Naive thymus-derived CD4-positive, alpha-beta T cell (primary cell): ENCODE measurements at regions of chr20 and their contacts with region 1.

Region 1: GRCh38 chr20:50588034-50588611 is 77.9 kb downstream of the PTPN1 start:
- DNase-seq: peak; percentile 45 to 78 (median 66)
- ATAC-seq: peak; percentile 88
- H3K4me3 ChIP-seq: no peak overlapping the region
- H3K4me3 Mint-ChIP-seq: peak overlapping the region in 1 of 10 donors; percentile 23
- H3K27ac ChIP-seq: no peak overlapping the region
- H3K27ac Mint-ChIP-seq: peak overlapping the region in 6 of 9 donors; percentile 4 to 80 (median 24)
- H3K4me1 ChIP-seq: no peaks in the 10 kb centered on the region
- H3K4me1 Mint-ChIP-seq: peaks cover 0 to 5% (median 2%) of the 10 kb centered on the region in 7 donors
- H3K27me3 ChIP-seq: no peaks in the 10 kb centered on the region
- H3K27me3 Mint-ChIP-seq: no peaks in the 10 kb centered on the region

Region 2: GRCh38 chr20:50504231-50504823 is 83.8 kb before region 1 on chr20:
- CTCF ChIA-PET with region 1: interaction called, 10 read pairs
- POLR2A ChIA-PET with region 1: no interaction called
- intact Hi-C with region 1: no loop called
- DNase-seq: no peak
- ATAC-seq: peak; percentile 39
- H3K4me3 ChIP-seq: no peak overlapping the region
- H3K4me3 Mint-ChIP-seq: no peak overlapping the region
- H3K27ac ChIP-seq: no peak overlapping the region
- H3K27ac Mint-ChIP-seq: peak overlapping the region in 1 of 9 donors; percentile 60
- H3K4me1 ChIP-seq: no peaks in the 10 kb centered on the region
- H3K4me1 Mint-ChIP-seq: peaks cover 0 to 23% (median 8%) of the 10 kb centered on the region in 7 donors
- H3K27me3 ChIP-seq: no peaks in the 10 kb centered on the region
- H3K27me3 Mint-ChIP-seq: no peaks in the 10 kb centered on the region

Region 3: GRCh38 chr20:50610221-50610620 is 22.1 kb after region 1 on chr20:
- CTCF ChIA-PET with region 1: no interaction called
- POLR2A ChIA-PET with region 1: no interaction called
- intact Hi-C with region 1: no loop called
- DNase-seq: no peak
- ATAC-seq: no peak
- H3K4me3 ChIP-seq: no peak overlapping the region
- H3K4me3 Mint-ChIP-seq: no peak overlapping the region
- H3K27ac ChIP-seq: no peak overlapping the region
- H3K27ac Mint-ChIP-seq: no peak overlapping the region
- H3K4me1 ChIP-seq: no peaks in the 10 kb centered on the region
- H3K4me1 Mint-ChIP-seq: no peaks in the 10 kb centered on the region
- H3K27me3 ChIP-seq: no peaks in the 10 kb centered on the region
- H3K27me3 Mint-ChIP-seq: peaks cover 0 to 6% (median 0%) of the 10 kb centered on the region in 5 donors

Region 4: GRCh38 chr20:50746138-50746940 is 158.2 kb after region 1 on chr20:
- CTCF ChIA-PET with region 1: no interaction called
- POLR2A ChIA-PET with region 1: no interaction called
- intact Hi-C with region 1: loop called in 1 of 2 experiments (anchors 5 kb)
- DNase-seq: no peak
- ATAC-seq: no peak
- H3K4me3 ChIP-seq: no peak overlapping the region
- H3K4me3 Mint-ChIP-seq: no peak overlapping the region
- H3K27ac ChIP-seq: no peak overlapping the region
- H3K27ac Mint-ChIP-seq: peak overlapping the region in 7 of 9 donors; percentile 17 to 80 (median 50)
- H3K4me1 ChIP-seq: no peaks in the 10 kb centered on the region
- H3K4me1 Mint-ChIP-seq: peaks cover 10 to 25% (median 19%) of the 10 kb centered on the region in 7 donors
- H3K27me3 ChIP-seq: no peaks in the 10 kb centered on the region
- H3K27me3 Mint-ChIP-seq: no peaks in the 10 kb centered on the region